Heart right ventricle (tissue), 16 donors: ENCODE measurements at regions of chr18 and their contacts with region 1.

Region 1: DNA sequence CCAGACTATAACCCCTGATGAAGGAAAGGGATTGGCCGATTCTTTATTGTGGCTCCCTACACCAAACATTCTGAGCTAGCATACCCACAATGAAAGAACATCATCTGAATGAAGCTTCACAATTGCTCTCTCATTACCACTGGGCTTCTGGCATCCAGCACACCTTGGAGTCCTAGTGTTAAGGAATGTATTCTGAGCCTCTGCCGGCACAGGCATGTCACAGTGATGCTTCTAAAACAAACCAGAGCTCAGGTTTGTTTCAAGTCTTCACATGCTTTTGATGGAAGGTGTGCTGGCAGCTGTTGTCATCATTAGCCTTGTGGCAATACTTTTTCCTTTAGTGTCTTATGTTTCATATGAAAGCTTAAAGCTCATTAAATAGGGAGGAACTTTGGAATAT is 76.3 kb upstream of the RBBP8 start:
- DNase-seq: no peak
- ATAC-seq: no peak
- H3K4me3 ChIP-seq: no peak overlapping the region
- H3K27ac ChIP-seq: no peak overlapping the region
- H3K4me1 ChIP-seq: no peaks in the 10 kb centered on the region
- H3K27me3 ChIP-seq: peaks cover 0 to 39% (median 10%) of the 10 kb centered on the region in 7 donors
- CTCF ChIP-seq: no peak

Region 2: GRCh38 chr18:22694954-22695353 is 161.9 kb before region 1 on chr18:
- intact Hi-C with region 1: no loop called
- DNase-seq: peak; percentile 30 to 43
- ATAC-seq: peak in 5 of 8 donors; percentile 56 to 93 (median 71)
- H3K4me3 ChIP-seq: peak overlapping the region in 1 of 10 donors; percentile 12
- H3K27ac ChIP-seq: peak overlapping the region in 1 of 10 donors; percentile 69
- H3K4me1 ChIP-seq: peaks cover 0 to 5% (median 0%) of the 10 kb centered on the region in 9 donors
- H3K27me3 ChIP-seq: no peaks in the 10 kb centered on the region
- CTCF ChIP-seq: no peak

Region 3: DNA sequence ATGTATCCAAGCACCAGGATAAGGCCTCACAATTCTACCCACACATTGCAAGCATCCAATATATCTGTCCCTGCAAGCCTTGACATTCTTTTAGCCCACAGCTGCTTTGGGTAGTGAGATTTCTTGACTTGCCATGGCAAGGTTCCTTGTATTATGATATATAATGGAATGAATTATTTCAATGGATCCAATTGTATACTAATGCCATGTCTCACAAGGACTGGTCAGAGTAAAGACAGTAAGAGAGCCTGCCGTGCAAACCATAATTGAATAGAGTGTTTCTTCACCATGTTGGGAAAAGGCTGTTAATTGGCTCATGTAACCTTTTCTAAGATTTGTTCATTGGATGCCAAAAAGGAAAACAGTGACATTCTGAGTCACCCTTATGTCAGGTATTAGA is 12.0 kb after region 1 on chr18:
- intact Hi-C with region 1: loop called in 1 of 10 experiments (anchors 1 kb)
- DNase-seq: no peak
- ATAC-seq: no peak
- H3K4me3 ChIP-seq: no peak overlapping the region
- H3K27ac ChIP-seq: no peak overlapping the region
- H3K4me1 ChIP-seq: peaks cover 0 to 4% (median 0%) of the 10 kb centered on the region in 9 donors
- H3K27me3 ChIP-seq: peaks cover 0 to 23% (median 0%) of the 10 kb centered on the region in 7 donors
- CTCF ChIP-seq: no peak

Region 4: DNA sequence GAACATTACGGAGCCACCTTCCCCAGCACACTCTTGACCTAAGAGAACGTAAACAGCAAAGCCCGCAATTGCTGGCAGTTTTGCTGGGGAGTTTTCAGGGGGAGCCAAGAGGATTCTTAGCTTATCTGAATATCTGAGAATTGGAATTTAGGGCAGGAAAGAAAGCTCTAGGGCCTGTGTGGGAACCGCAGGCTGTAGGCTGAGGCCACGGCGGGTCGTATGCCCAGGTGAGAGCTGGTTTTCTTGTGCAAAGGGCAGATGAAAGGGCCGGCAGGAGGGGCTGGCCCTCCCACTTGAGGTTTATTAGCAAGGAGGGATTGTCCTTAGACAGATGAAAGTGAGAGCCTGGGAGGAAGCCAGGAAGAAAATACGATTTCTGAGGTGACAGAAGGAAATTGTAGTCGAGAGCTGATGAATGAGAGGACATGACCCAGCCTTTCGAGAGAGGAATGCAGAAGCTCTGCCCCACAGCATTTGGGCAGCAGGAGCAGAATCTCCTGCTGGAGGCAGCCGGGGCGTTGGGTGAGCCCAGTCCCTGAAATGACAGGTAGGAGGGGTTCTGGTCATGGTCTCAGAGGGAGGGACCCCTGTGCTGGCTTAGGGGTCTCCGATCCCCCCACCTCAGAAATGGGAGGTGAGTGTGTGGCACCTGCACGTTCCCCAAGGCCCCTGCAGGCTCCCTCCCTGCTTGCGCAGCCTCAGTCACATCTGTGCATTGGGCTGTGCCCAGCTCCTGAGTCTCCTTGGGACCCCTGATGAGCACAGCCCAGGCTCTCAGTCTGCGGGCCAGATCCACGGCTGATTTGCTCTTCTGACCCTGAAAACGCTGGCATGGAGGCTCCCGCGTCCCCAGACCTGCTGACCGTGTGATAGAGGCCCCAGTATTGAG is 339.5 kb after region 1 on chr18:
- intact Hi-C with region 1: loop called in 1 of 10 experiments (anchors 5 kb)
- DNase-seq: no peak
- ATAC-seq: no peak
- H3K4me3 ChIP-seq: no peak overlapping the region
- H3K27ac ChIP-seq: peak overlapping the region in 1 of 10 donors; percentile 5
- H3K4me1 ChIP-seq: peaks cover 0 to 32% (median 27%) of the 10 kb centered on the region in 9 donors
- H3K27me3 ChIP-seq: no peaks in the 10 kb centered on the region
- CTCF ChIP-seq: no peak